ENCODE measurements at regions of chr12 and their contacts with region 1.

Region 1: DNA sequence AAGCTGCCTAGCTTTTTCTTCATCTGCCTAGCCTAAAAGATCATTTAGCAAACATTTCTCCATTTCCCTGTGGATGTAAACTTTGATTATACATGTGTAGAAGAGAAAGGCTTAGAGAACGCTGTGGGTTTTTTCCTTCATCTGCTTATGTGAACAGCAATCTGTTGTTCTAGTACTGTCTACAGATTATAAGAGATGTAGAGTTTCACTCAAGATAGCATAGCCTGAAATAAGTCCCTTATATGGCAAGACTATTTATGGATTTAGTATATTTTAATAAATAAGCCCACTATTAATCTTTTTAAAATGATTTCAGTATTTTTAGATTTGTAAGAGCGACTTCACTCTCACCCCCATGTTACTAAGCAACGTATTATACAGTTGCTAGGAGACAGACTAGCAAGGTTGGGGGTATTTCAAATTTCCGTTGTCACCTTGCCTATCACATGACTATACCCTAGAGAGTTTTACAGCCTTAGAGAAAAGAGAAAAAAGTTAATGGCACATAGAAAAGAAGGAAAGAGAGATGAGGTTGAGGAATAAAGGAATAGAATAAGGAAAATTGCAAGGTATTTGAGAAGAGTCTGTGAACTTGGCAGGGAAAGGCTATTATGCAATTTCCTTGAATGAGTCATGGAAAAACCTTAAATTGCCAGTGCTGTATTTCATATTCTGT is 12.2 kb upstream of the TUBA1A start:
- DNase-seq: peak; percentile 87
- H3K4me3 ChIP-seq: no peak overlapping the region
- CTCF ChIP-seq: no peak

Region 2: GRCh38 chr12:48542300-48542928 is 658.6 kb before region 1 on chr12:
- in situ Hi-C with region 1: no loop called
- DNase-seq: no peak
- H3K4me3 ChIP-seq: no peak overlapping the region
- CTCF ChIP-seq: no peak

Region 3: DNA sequence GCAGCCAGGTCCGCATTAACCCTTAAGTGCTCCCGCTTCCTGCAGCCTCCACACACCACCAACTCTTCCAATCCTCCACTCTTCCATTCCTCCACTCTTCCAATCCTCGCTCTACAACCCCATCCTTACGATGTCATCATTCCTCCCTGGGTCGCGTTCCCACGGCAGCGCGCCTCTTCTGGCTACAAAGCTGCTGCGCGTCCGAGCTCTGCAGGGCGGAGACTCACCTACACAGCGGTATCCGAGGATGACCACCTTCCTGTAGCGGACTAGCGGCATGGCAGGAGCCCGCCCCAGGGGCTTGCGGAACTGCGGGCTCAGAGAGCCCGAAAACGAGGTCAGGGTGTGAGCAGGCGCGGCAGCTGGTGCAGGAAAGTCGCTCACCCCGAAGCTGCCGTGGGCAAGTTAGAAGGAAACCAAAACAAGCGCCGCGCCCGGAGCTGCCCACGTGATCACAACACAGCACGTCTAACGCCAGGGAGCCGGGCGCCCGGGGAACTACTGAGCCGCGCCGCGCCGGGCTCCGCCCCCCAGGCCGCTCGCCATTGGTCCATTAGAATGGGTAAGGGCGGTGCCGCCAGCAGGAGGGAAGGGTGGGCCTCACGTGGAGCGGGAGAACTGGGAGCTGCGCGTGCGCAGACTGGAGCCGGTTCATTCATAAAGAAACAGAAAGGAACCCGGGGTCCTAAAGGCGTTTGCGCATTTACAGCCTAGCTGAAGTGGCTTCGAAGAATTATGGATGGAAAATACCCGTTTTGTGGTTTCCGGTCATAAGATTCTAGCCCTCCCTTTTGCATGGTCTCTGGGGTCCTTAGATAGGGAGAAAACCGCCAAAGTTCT is 131.3 kb before region 1 on chr12 and contains the start of gene RHEBL1:
- in situ Hi-C with region 1: loop called (anchors 10 kb)
- DNase-seq: peak; percentile 77
- H3K4me3 ChIP-seq: peak within 1 kb of the TSS; percentile 71
- CTCF ChIP-seq: no peak

Measured in astrocyte of the cerebellum (primary cell).